CD8-positive, alpha-beta T cell (primary cell): ENCODE measurements at regions of chr7 and their contacts with region 1.

Region 1: DNA sequence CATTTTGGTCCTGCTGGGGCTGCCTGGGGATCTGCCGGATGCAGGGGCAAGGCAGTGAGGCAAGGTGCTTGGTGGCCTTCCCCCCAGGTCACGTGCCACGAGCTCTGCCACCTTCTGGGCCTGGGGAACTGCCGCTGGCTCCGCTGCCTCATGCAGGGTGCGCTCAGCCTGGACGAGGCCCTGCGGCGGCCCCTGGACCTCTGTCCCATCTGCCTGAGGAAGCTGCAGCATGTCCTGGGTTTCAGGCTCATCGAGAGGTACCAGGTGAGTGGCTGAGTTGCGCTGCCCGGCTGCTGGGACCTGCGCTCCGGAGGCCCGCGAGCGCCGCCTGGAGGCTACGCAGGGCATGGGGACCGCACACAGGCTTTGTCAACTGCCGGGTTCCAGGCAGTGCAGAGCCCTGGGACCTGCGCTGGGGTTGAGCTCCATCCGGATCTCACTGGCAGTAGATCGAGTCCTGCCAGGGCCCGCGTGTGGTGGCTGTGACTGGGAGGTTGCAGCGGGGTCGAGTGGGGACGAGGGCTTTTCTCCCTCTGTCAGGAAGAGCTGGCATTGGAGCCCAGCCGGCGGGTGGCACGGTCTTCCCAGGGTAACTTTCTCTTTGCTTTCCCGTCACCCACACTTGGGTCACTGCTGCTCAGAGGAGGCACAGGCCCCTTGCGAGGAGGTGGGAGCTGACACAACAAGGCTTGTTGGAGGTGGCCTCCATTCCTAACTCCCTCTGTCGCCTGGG is 21.7 kb downstream of the AMZ1 start:
- DNase-seq: peak; percentile 58 to 90 (median 76)
- ATAC-seq: peak; percentile 78
- H3K4me3 ChIP-seq: peak overlapping the region; percentile 31 to 38
- H3K4me3 Mint-ChIP-seq: peak overlapping the region; percentile 66
- H3K27ac ChIP-seq: no peak overlapping the region
- H3K27ac Mint-ChIP-seq: peak overlapping the region; percentile 62
- H3K4me1 ChIP-seq: peaks cover 32% of the 10 kb centered on the region
- H3K4me1 Mint-ChIP-seq: peaks cover 30% of the 10 kb centered on the region
- H3K27me3 ChIP-seq: peaks cover 7 to 9% of the 10 kb centered on the region in 2 experiments
- H3K27me3 Mint-ChIP-seq: peaks cover 8% of the 10 kb centered on the region
- CTCF ChIP-seq: peak; percentile 83

Region 2: GRCh38 chr7:2477447-2478398 is 232.0 kb before region 1 on chr7:
- CTCF ChIA-PET with region 1: interaction called, 13 read pairs
- POLR2A ChIA-PET with region 1: no interaction called
- intact Hi-C with region 1: loop called in 1 of 2 experiments (anchors 1 kb)
- DNase-seq: peak; percentile 30 to 84 (median 63)
- ATAC-seq: peak; percentile 94
- H3K4me3 ChIP-seq: no peak overlapping the region
- H3K4me3 Mint-ChIP-seq: no peak overlapping the region
- H3K27ac ChIP-seq: no peak overlapping the region
- H3K27ac Mint-ChIP-seq: no peak overlapping the region
- H3K4me1 ChIP-seq: peaks cover 15% of the 10 kb centered on the region
- H3K4me1 Mint-ChIP-seq: no peaks in the 10 kb centered on the region
- H3K27me3 ChIP-seq: no peaks in the 10 kb centered on the region
- H3K27me3 Mint-ChIP-seq: no peaks in the 10 kb centered on the region
- CTCF ChIP-seq: peak; percentile 52

Region 3: DNA sequence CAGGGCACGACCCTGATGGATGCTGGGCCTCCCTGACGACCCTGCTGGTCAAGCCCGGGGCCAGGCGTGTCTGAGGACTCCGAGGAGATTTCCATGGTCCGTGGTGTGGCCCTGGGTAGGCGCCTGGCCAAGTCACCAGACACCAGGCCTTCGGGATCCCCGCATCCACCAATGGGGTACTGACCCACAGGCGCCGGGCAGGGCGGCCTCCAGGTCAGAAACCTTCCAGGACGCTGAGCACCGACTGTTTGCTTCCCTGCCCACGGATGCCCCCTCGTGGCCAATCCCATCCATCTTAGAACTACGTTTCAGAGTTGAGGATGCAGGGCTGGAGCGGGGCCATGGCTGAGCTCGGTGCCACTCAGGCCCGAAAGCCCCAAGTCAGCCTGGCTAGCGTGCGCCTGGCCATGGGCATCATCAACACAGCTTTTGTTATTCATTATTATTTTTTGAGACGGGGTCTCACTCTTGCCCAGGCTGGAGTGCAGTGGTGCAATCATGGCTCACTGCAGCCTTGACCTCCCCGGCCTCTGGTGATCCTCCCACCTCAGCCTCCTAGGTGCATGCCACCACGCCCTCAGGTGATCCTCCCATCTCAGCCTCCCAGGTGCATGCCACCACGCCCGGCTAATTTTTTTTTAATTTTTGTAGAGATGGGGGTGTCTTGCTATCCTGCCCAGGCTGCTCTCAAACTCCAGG is 28.8 kb before region 1 on chr7:
- CTCF ChIA-PET with region 1: interaction called, 15 read pairs
- POLR2A ChIA-PET with region 1: no interaction called
- intact Hi-C with region 1: no loop called
- DNase-seq: peak in 7 of 9 experiments; percentile 22 to 71 (median 60)
- ATAC-seq: no peak
- H3K4me3 ChIP-seq: no peak overlapping the region
- H3K4me3 Mint-ChIP-seq: no peak overlapping the region
- H3K27ac ChIP-seq: no peak overlapping the region
- H3K27ac Mint-ChIP-seq: no peak overlapping the region
- H3K4me1 ChIP-seq: no peaks in the 10 kb centered on the region
- H3K4me1 Mint-ChIP-seq: no peaks in the 10 kb centered on the region
- H3K27me3 ChIP-seq: peaks cover 0 to 3% of the 10 kb centered on the region in 2 experiments
- H3K27me3 Mint-ChIP-seq: peaks cover 9% of the 10 kb centered on the region
- CTCF ChIP-seq: peak; percentile 37

Region 4: DNA sequence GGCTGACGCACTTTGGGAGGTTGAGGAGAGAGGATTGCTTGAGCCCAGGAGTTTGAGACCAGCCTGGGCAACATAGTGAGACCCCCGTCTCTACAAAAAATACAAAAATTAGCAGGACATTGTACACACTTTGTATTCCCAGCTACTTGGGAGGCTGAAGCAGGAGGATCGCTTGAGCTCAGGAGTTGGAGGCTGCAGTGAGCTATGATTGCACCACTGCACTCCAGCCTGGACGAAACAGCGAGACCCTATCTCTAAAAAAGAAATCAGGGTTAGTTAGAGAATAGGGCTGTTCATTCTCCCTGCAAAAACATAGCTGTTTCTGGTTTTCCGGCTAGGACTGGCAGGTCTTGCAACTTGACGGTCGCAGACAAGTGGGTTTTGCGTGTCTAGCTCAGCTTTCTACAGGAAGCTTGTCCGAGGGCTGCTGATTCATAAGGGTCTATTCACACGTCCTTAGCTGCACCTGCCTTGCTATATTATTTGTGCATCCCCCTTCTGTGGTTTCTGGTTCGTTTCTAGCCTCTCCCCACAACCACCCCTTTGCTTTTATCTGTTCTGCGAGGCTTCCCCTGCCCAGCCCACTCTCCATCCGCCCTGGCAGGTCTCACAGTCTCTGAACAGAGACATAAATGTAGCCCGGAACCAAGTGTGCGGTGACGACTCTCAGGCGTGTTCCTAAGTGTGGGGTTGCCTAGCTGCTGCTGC is 11.0 kb before region 1 on chr7:
- CTCF ChIA-PET with region 1: interaction called, 59 read pairs
- POLR2A ChIA-PET with region 1: interaction called, 19 read pairs
- intact Hi-C with region 1: loop called in 1 of 2 experiments (anchors 1 kb)
- DNase-seq: peak; percentile 34 to 92 (median 76)
- ATAC-seq: peak; percentile 92
- H3K4me3 ChIP-seq: peak overlapping the region; percentile 15
- H3K4me3 Mint-ChIP-seq: peak overlapping the region; percentile 64
- H3K27ac ChIP-seq: peak overlapping the region in 1 of 2 experiments; percentile 38
- H3K27ac Mint-ChIP-seq: peak overlapping the region; percentile 85
- H3K4me1 ChIP-seq: peaks cover 23% of the 10 kb centered on the region
- H3K4me1 Mint-ChIP-seq: peaks cover 21% of the 10 kb centered on the region
- H3K27me3 ChIP-seq: no peaks in the 10 kb centered on the region
- H3K27me3 Mint-ChIP-seq: no peaks in the 10 kb centered on the region
- CTCF ChIP-seq: no peak